H1 (cell line): ENCODE measurements at regions of chr2 and their contacts with region 1.

Region 1: DNA sequence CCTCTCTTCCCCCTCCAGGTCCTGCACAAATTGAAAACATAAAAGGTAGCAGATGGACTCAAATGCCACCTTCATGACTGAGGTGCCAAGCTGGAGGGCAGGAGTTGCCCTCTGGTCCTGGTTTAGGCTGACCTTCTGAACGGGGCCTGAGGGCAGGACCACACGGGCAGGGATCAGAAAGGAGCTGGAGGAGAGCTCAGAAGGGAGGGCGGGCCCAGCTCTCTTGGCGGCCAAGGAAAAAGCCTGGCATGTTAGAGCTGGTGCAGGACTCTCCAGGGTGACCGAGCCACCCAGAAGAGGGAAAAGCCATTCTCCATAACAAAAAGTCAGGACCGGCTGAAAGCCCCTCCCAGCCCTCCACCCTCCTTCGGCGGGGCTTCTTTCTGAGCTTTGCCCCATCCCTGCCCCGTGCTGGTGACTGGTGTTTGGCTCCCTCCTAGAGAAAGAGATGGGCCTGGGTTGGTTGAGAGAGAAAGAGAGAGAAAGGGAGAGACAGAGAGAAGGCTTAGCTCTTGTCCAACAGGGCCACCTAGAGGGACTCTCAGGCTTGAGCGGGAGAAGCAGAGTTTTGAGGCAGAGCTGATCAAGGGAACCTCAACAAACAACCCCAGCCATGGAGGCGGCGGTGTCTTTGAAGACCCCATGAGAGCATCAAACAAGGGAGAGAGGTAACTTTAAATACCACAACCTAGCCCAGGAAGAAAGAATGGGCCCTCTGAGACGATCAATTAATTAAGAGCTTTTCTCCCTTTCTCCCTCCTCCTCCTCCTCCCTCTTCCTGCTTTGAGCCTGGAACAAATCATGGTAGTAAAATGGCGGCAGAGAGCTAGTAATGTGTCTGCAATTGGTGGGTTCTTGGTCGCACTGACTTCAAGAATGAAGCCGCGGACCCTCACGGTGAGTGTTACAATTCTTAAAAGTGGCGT is 50.8 kb downstream of the WIPF1 start:
- DNase-seq: peak; percentile 38 to 65
- H3K4me3 ChIP-seq: no peak overlapping the region
- H3K27ac ChIP-seq: no peak overlapping the region
- H3K4me1 ChIP-seq: peaks cover 0 to 2% (median 0%) of the 10 kb centered on the region in 4 experiments; a peak in 1 of 7 replicates
- H3K27me3 ChIP-seq: no peaks in the 10 kb centered on the region
- CTCF ChIP-seq: peak; percentile 31 to 74 (median 74)
- EP300 ChIP-seq: no peak; a peak in 1 of 3 replicates
- POLR2A ChIP-seq: no peak
- RAD21 ChIP-seq: peak; percentile 78 to 88

Region 2: GRCh38 chr2:174536304-174536703 is 10.5 kb before region 1 on chr2:
- CTCF ChIA-PET with region 1: interaction called, 10 read pairs
- POLR2A ChIA-PET with region 1: no interaction called
- DNase-seq: no peak
- H3K4me3 ChIP-seq: no peak overlapping the region
- H3K27ac ChIP-seq: no peak overlapping the region
- H3K4me1 ChIP-seq: no peaks in the 10 kb centered on the region
- H3K27me3 ChIP-seq: no peaks in the 10 kb centered on the region; a peak in 1 of 7 replicates
- CTCF ChIP-seq: no peak
- EP300 ChIP-seq: no peak
- POLR2A ChIP-seq: no peak
- RAD21 ChIP-seq: no peak

Region 3: DNA sequence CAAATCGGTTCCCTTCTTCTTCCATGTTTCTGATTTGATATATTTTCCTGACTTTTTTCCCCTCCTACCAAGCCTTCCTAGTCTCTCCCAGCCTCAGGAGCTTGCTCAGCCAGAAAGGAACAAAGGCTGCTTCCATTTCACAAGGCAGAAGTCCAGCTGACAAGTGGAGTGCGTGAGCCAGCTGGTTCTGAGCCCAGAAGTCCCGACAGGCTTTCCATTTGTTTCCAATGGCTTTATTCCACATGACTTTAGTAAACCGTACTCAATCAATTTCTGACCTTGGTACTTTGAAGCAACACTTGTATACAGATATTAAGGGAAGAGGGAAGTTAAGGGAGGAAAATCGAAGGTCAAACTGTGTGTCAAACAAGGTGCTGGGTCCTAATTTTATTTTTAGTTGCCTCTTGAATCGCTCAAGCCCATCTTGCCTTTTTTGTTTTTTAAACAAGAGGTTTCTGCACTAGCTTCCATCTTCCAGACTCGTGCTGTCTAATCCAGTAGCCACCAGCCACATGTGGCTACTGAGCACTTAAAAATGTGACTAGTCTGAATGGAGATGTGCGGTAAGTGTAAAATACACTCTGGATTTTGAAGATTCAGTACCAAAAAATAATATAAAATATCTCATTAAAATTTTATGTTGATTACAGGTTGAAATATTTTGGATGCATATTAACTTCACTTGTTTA is 14.6 kb after region 1 on chr2:
- CTCF ChIA-PET with region 1: interaction called, 16 read pairs
- POLR2A ChIA-PET with region 1: no interaction called
- DNase-seq: no peak
- H3K4me3 ChIP-seq: no peak overlapping the region
- H3K27ac ChIP-seq: no peak overlapping the region
- H3K4me1 ChIP-seq: no peaks in the 10 kb centered on the region
- H3K27me3 ChIP-seq: no peaks in the 10 kb centered on the region
- CTCF ChIP-seq: no peak
- EP300 ChIP-seq: no peak
- POLR2A ChIP-seq: no peak
- RAD21 ChIP-seq: no peak

Region 4: GRCh38 chr2:174593574-174594203 is 46.8 kb after region 1 on chr2:
- CTCF ChIA-PET with region 1: no interaction called
- POLR2A ChIA-PET with region 1: no interaction called
- DNase-seq: no peak
- H3K4me3 ChIP-seq: no peak overlapping the region
- H3K27ac ChIP-seq: no peak overlapping the region; the same call in 1 of the 2 replicates
- H3K4me1 ChIP-seq: peaks cover 0 to 5% (median 4%) of the 10 kb centered on the region in 4 experiments; a peak in 3 of 7 replicates
- H3K27me3 ChIP-seq: no peaks in the 10 kb centered on the region
- CTCF ChIP-seq: no peak
- EP300 ChIP-seq: no peak
- POLR2A ChIP-seq: no peak
- RAD21 ChIP-seq: no peak